Left ventricle myocardium inferior (tissue), 1 donor: ENCODE measurements at regions of chr7 and their contacts with region 1.

Region 1: GRCh38 chr7:92621026-92621540 is 30.9 kb upstream of the FAM133B start:
- DNase-seq: peak; percentile 28
- H3K4me3 ChIP-seq: no peak overlapping the region
- H3K27ac ChIP-seq: peak overlapping the region; percentile 51
- H3K4me1 ChIP-seq: peaks cover 44% of the 10 kb centered on the region
- H3K27me3 ChIP-seq: no peaks in the 10 kb centered on the region
- CTCF ChIP-seq: peak; percentile 84

Region 2: GRCh38 chr7:92691578-92691977 is 70.5 kb after region 1 on chr7:
- intact Hi-C with region 1: loop called (anchors 10 kb)
- DNase-seq: no peak
- H3K4me3 ChIP-seq: no peak overlapping the region
- H3K27ac ChIP-seq: peak overlapping the region; percentile 10
- H3K4me1 ChIP-seq: peaks cover 24% of the 10 kb centered on the region
- H3K27me3 ChIP-seq: no peaks in the 10 kb centered on the region
- CTCF ChIP-seq: peak; percentile 71

Region 3: DNA sequence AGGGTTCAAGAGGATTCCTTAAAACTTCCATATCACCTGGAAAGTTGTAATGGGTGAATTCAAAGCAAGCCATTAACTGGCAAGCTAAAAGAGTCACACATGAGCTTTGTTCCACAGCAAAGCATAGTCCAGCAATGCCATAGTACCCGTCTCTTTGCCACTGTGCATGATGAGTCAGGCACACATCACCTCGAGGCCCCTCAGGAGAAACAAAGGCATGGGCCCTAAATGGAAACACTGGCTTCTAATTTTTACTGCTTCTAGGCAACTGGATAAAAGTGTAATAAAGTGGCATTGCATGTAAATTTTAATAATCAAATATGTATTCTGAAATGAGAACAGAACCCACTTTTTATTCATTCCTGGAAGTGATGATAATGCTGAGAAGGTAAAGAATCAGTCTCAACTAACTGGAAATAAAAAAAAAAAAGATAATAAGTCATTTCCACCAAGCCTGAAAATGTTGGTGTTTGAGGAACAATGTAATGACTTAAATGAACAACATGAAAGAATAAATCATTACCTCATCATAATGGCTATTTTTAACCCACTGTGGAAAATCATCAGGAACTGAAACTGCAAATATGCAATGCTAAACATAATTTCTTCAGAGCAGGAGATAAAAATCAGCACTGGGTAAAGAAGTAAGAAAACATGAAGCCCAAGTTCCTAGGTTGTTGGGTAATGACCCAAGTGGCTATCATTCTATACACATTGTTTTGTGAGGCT is 110.4 kb after region 1 on chr7:
- intact Hi-C with region 1: no loop called
- DNase-seq: no peak
- H3K4me3 ChIP-seq: no peak overlapping the region
- H3K27ac ChIP-seq: peak overlapping the region; percentile 56
- H3K4me1 ChIP-seq: peaks cover 27% of the 10 kb centered on the region
- H3K27me3 ChIP-seq: no peaks in the 10 kb centered on the region
- CTCF ChIP-seq: no peak

Region 4: DNA sequence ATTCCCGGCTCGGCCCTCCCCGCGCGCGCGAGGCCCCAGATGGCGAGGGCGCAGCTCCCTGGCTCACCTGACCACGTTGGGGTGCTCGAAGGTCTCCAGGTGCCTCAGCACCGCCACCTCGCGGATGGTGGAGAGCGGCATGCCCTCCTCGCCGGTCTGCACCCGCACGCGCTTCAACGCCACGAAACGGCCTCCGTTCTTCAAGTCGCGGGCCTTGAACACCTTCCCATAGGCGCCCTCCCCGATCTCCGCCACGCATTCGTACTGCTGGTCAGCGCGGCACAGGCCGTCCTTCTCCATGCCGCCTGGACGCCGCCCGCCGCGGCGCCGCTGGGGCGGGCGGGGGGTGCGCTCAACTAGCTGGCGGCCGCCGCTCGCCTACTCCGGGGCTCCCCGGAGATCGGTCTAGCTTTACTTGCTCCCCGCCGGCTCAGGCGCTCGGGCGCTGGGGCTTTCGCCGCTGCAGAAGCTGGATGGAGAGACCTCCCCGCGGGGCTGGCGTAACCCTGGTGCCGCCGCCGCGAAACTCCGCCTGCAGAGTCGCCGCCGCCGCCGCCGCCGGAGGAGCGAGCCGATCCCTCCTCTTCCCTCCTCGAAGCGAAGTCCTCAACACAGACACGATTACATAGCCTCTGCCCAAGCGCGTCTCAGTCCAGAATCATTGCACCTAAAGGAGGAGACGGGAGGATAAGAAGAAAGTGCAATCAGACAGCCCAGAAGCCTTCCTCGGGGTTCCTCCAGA is 212.1 kb after region 1 on chr7:
- intact Hi-C with region 1: loop called (anchors 5 kb)
- DNase-seq: peak; percentile 85
- H3K4me3 ChIP-seq: peak overlapping the region; percentile 90
- H3K27ac ChIP-seq: peak overlapping the region; percentile 96
- H3K4me1 ChIP-seq: peaks cover 88% of the 10 kb centered on the region
- H3K27me3 ChIP-seq: no peaks in the 10 kb centered on the region
- CTCF ChIP-seq: peak; percentile 90

Region 5: DNA sequence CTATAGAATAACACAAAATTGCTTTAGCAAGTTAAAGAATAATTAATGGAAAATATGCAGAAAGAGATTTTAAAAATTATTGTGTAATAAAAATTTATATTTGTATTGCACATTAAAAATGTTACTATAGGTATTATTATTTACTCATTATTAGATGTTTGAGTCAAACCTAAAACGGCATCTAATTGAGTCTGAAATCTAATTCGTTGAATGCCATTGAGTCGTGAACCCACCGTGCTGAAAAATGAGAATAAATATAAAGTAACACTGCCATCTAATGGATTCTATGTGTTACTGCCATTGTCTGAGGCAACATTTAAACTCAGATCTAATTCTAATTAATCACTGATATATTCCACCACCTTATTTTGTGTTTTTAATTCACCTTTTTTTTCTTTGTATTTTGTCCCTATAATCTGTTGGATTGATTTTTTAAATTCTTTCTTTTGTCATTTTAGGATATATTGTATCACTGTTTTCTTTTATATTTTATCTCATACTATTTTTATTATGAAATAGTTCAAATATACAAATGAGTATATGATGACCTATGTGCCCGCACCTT is 434.5 kb after region 1 on chr7:
- intact Hi-C with region 1: loop called (anchors 5 kb)
- DNase-seq: no peak
- H3K4me3 ChIP-seq: no peak overlapping the region
- H3K27ac ChIP-seq: no peak overlapping the region
- H3K4me1 ChIP-seq: peaks cover 6% of the 10 kb centered on the region
- H3K27me3 ChIP-seq: peaks cover 13% of the 10 kb centered on the region
- CTCF ChIP-seq: peak; percentile 90